ENCODE measurements at regions of chr6 and their contacts with region 1.

Region 1: GRCh38 chr6:157045831-157046454 is 268.8 kb downstream of the ARID1B start:
- DNase-seq: peak in 4 of 42 donors; percentile 43 to 62 (median 56)

Region 2: GRCh38 chr6:157274471-157275226 is 228.7 kb after region 1 on chr6:
- intact Hi-C with region 1: loop called (anchors 10 kb)
- DNase-seq: peak; percentile 17 to 87 (median 74)